ENCODE measurements at regions of chr7 and their contacts with region 1.

Region 1: DNA sequence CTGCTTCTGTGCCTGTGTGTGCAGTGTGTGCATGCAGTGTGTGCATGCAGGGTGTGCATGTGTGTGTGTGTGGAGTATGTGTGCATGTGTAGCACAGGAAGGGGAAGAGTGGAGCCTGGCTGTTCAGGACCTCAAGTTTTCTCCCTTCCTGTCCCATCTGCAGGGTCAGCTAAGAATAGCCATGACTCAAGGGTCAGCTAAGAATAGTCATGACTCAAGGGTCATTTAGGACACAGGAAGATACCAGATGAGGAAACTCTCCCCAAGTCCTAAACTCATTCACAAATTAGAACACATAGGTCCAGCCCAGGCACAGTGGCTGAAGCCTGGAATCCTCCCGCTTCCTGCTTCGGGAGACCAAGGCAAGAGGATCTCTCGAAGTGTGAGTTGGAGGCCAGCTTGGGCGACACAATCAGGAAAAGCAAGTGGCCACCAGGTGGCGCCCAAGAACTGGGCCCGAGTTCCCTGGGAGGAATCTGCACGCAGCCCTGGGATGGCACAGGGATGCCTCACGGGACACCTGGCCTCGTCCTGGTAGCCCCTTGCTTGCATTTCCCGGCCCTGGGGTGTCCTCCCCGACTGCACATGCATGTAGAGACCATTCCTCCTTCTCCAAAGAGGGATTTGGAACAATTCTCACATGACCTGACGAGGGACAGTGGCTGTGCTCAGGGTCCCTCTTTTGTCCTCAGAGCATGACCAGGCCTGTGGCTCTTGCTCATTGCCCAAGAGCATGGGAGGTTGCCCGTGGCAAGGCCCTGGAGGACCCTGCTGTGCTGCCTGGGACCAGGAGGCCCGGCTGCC is 21.4 kb upstream of the VOPP1 start:
- DNase-seq: peak; percentile 70
- ATAC-seq: peak; percentile 50 to 76

Region 2: DNA sequence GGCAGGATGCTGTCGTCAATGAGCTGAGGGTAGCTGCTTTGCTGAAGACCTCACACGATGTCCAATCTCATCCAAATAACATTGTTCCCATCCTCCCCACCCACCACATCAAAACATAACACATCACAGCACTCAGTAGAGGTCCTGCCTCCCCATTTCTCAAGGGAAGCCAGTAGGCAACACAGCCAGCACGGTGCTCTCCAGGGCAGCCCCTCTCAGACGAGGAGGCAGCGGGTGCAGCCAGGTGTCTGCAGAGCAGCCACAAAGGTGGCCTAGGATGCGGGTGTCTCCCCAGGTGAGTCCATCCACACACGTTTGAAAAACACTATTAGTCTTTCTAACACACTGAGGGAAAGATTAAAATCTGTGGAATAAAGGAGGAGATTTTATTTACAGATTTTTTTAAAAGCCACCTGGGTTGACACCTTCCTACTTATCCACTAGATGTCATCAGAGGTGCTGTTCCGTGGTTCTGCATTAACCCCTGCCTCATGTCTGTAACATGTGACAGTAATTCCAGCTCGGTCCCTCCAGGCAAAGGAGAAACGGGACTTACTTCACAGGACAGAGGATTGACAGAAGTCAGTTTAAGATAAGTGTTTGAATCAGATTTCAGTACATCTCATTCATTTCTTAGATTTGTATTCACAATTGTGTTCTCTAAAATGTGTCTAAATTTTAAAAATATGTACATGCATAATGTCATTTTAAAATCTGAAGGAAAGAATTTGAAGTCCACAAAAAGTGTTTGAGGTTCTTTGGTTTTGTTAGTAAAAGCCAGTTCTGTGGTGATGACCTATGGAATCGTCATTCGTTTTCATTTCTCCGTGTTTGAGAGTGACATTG is 160.6 kb before region 1 on chr7:
- intact Hi-C with region 1: loop called (anchors 2 to 10 kb)
- DNase-seq: no peak
- ATAC-seq: peak; percentile 35 to 50

Region 3: DNA sequence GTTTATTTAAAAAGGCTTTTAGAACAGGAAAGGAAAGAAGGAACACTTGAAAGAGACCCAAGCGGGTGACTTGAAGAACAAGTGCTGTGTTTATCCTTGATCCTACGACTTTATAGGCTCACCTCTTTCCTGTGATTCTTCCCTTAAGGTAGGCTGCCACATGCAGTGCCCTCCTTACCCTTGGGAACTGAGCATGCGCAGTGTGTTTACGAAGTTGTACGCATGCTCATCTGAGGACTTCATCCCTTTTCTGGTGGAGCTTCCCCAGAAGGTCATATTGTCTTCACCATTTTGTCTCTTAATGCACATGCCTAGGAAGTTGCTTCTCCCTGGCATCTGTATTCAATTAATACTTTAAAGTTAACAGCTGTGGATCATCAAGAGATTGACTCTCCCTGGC is 28.5 kb after region 1 on chr7:
- intact Hi-C with region 1: no loop called
- DNase-seq: no peak
- ATAC-seq: no peak

Measured in left cardiac atrium (tissue), 4 donors.